ENCODE measurements at regions of chr2 and their contacts with region 1.

Region 1: DNA sequence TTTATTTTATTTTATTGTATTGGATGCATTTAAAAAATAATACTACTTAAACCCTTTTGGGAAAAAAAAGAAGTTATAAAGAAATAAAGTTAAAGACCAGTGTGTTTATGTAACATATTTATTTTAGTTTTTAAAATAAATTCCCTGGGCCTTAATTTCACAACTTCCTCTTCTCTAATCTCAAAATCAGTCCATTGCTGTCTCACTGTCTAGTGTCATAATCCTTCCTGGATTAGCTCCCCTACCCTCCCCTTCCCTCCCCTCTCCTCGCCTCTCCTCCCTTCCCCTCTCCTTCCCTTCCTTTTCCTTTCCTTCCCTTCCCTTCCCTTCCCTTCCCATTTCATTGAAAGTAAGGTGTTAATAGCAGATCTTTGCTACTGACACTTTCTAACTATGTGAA is 40.3 kb upstream of the ZEB2 start:
- DNase-seq: no peak
- ATAC-seq: no peak
- H3K4me3 ChIP-seq: no peak overlapping the region
- H3K4me3 Mint-ChIP-seq: no peak overlapping the region
- H3K27ac ChIP-seq: no peak overlapping the region
- H3K27ac Mint-ChIP-seq: no peak overlapping the region
- H3K4me1 ChIP-seq: no peaks in the 10 kb centered on the region
- H3K4me1 Mint-ChIP-seq: no peaks in the 10 kb centered on the region
- H3K27me3 ChIP-seq: no peaks in the 10 kb centered on the region
- H3K27me3 Mint-ChIP-seq: peaks cover 2% of the 10 kb centered on the region in 2 donors

Region 2: GRCh38 chr2:144304202-144304601 is 256.0 kb before region 1 on chr2:
- CTCF ChIA-PET with region 1: no interaction called
- POLR2A ChIA-PET with region 1: no interaction called
- DNase-seq: no peak
- ATAC-seq: no peak
- H3K4me3 ChIP-seq: no peak overlapping the region
- H3K4me3 Mint-ChIP-seq: no peak overlapping the region
- H3K27ac ChIP-seq: no peak overlapping the region
- H3K27ac Mint-ChIP-seq: no peak overlapping the region
- H3K4me1 ChIP-seq: no peaks in the 10 kb centered on the region
- H3K4me1 Mint-ChIP-seq: peaks cover 0 to 15% (median 4%) of the 10 kb centered on the region in 3 donors
- H3K27me3 ChIP-seq: no peaks in the 10 kb centered on the region
- H3K27me3 Mint-ChIP-seq: no peaks in the 10 kb centered on the region

Region 3: DNA sequence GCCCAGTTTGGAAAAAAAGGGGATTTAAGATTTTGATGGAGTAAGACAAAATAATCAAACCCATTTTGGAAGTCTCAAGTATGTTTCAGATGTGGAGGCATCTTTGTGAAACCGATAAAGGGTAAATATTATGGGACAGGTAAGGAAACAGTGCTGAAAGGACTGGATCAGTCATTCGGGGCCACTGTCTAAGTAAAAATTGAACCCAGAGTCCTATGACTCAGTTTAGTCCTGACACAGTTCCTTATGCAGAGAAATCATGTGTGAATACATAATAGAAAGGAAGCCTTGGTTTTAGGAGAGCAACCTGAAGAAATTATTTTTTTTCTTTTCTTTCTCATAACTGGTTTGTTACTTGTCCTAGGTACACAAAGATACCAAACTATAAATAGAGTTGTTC is 25.0 kb before region 1 on chr2:
- CTCF ChIA-PET with region 1: interaction called in 1 of 2 experiments, 10 read pairs
- POLR2A ChIA-PET with region 1: no interaction called
- DNase-seq: no peak
- ATAC-seq: no peak
- H3K4me3 ChIP-seq: no peak overlapping the region
- H3K4me3 Mint-ChIP-seq: no peak overlapping the region
- H3K27ac ChIP-seq: no peak overlapping the region
- H3K27ac Mint-ChIP-seq: no peak overlapping the region
- H3K4me1 ChIP-seq: no peaks in the 10 kb centered on the region
- H3K4me1 Mint-ChIP-seq: no peaks in the 10 kb centered on the region
- H3K27me3 ChIP-seq: no peaks in the 10 kb centered on the region
- H3K27me3 Mint-ChIP-seq: peaks cover 8 to 16% of the 10 kb centered on the region in 2 donors

Region 4: GRCh38 chr2:145137211-145137610 is 577.0 kb after region 1 on chr2:
- CTCF ChIA-PET with region 1: no interaction called
- POLR2A ChIA-PET with region 1: no interaction called
- DNase-seq: no peak
- ATAC-seq: no peak
- H3K4me3 ChIP-seq: no peak overlapping the region
- H3K4me3 Mint-ChIP-seq: no peak overlapping the region
- H3K27ac ChIP-seq: no peak overlapping the region
- H3K27ac Mint-ChIP-seq: no peak overlapping the region
- H3K4me1 ChIP-seq: no peaks in the 10 kb centered on the region
- H3K4me1 Mint-ChIP-seq: no peaks in the 10 kb centered on the region
- H3K27me3 ChIP-seq: no peaks in the 10 kb centered on the region
- H3K27me3 Mint-ChIP-seq: no peaks in the 10 kb centered on the region